K562 (cell line): ENCODE measurements at regions of chr1 and their contacts with region 1.

Region 1: GRCh38 chr1:110106013-110106941 is 6.0 kb upstream of the UBL4B start:
- DNase-seq: peak; percentile 83 to 88 (median 88)
- ATAC-seq: peak; percentile 94
- H3K4me3 ChIP-seq: no peak overlapping the region
- H3K27ac ChIP-seq: no peak overlapping the region
- H3K4me1 ChIP-seq: no peaks in the 10 kb centered on the region; a peak in 1 of 5 replicates
- H3K27me3 ChIP-seq: peaks cover 30 to 68% of the 10 kb centered on the region in 2 experiments
- CTCF ChIP-seq: peak; percentile 95 to 99 (median 95)
- EP300 ChIP-seq: no peak
- POLR2A ChIP-seq: no peak
- RAD21 ChIP-seq: peak; percentile 88 to 97

Region 2: GRCh38 chr1:110053557-110054428 is 52.5 kb before region 1 on chr1:
- CTCF ChIA-PET with region 1: interaction called, 31 read pairs
- POLR2A ChIA-PET with region 1: interaction called, 10 read pairs
- in situ Hi-C with region 1: loop called (anchors 5 kb)
- intact Hi-C with region 1: loop called (anchors 2 kb)
- DNase-seq: peak; percentile 79 to 87 (median 84)
- ATAC-seq: peak; percentile 87
- H3K4me3 ChIP-seq: no peak overlapping the region
- H3K27ac ChIP-seq: no peak overlapping the region
- H3K4me1 ChIP-seq: peaks cover 13 to 16% of the 10 kb centered on the region in 2 experiments
- H3K27me3 ChIP-seq: no peaks in the 10 kb centered on the region
- CTCF ChIP-seq: peak; percentile 93 to 99 (median 97)
- EP300 ChIP-seq: no peak
- POLR2A ChIP-seq: no peak
- RAD21 ChIP-seq: peak; percentile 87 to 92

Region 3: GRCh38 chr1:110087812-110088738 is 18.2 kb before region 1 on chr1:
- CTCF ChIA-PET with region 1: interaction called, 14 read pairs
- POLR2A ChIA-PET with region 1: interaction called, 48 read pairs
- in situ Hi-C with region 1: no loop called
- intact Hi-C with region 1: loop called (anchors 2 kb)
- DNase-seq: peak; percentile 80 to 87 (median 85)
- ATAC-seq: peak; percentile 97
- H3K4me3 ChIP-seq: no peak overlapping the region
- H3K27ac ChIP-seq: no peak overlapping the region
- H3K4me1 ChIP-seq: peaks cover 13 to 24% of the 10 kb centered on the region in 2 experiments
- H3K27me3 ChIP-seq: peaks cover 29 to 50% of the 10 kb centered on the region in 2 experiments
- CTCF ChIP-seq: peak; percentile 82 to 87 (median 84)
- EP300 ChIP-seq: no peak
- POLR2A ChIP-seq: no peak
- RAD21 ChIP-seq: peak; percentile 59 to 79

Region 4: GRCh38 chr1:110161877-110162276 is 55.6 kb after region 1 on chr1:
- CTCF ChIA-PET with region 1: no interaction called
- POLR2A ChIA-PET with region 1: no interaction called
- in situ Hi-C with region 1: no loop called
- intact Hi-C with region 1: no loop called
- DNase-seq: no peak
- ATAC-seq: no peak
- H3K4me3 ChIP-seq: no peak overlapping the region
- H3K27ac ChIP-seq: no peak overlapping the region
- H3K4me1 ChIP-seq: no peaks in the 10 kb centered on the region
- H3K27me3 ChIP-seq: peaks cover 19 to 74% of the 10 kb centered on the region in 2 experiments
- CTCF ChIP-seq: no peak
- EP300 ChIP-seq: no peak
- POLR2A ChIP-seq: no peak
- RAD21 ChIP-seq: no peak